Lower leg skin (tissue), 4 donors: ENCODE measurements at regions of chr1 and their contacts with region 1.

Region 1: GRCh38 chr1:153749408-153750005 is 21.7 kb downstream of the INTS3 start:
- DNase-seq: peak; percentile 93 to 97
- H3K4me3 ChIP-seq: no peak overlapping the region
- CTCF ChIP-seq: peak in 1 of 3 donors; percentile 74
- POLR2A ChIP-seq: no peak

Region 2: GRCh38 chr1:153679337-153680119 is 70.0 kb before region 1 on chr1:
- intact Hi-C with region 1: loop called (anchors 10 kb)
- DNase-seq: no peak
- H3K4me3 ChIP-seq: peak overlapping the region; percentile 41
- CTCF ChIP-seq: no peak
- POLR2A ChIP-seq: no peak